ENCODE measurements at regions of chr4 and their contacts with region 1.

Region 1: GRCh38 chr4:97812768-97813167 is 330.5 kb downstream of the STPG2 start:
- DNase-seq: no peak
- ATAC-seq: no peak
- H3K4me3 ChIP-seq: no peak overlapping the region
- H3K27ac ChIP-seq: no peak overlapping the region
- H3K4me1 ChIP-seq: no peaks in the 10 kb centered on the region
- H3K27me3 ChIP-seq: no peaks in the 10 kb centered on the region
- CTCF ChIP-seq: no peak

Region 2: DNA sequence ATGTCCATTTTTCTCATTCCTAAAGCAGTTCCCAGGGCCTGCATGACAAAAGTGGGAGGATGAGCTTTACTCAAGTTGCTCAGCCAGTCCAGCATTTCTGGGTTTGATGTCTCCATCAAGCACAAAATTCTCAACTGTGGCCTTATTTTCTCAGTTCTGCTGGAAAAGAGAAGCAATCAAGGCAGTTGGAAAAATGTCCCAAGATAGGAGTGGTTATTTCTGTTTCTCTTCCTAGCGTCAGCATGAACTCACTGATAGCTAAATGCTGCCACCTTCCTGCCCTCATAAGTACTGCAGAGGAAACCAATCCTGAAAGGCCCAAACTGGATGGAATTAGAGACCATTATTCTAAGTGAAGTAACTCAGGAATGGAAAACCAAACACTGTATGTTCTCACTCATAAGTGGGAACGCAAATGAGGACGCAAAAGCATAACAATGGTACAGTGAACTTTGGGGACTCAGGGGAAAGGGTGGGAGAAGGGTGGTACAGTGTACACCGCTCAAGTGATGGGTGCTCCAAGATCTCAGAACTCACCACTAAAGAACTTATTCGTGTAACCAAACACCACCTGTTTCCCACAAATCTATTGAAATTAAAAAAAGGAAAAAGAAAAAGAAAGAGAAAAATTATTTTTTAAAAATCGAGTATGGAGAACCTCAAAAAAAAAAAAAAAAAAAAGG is 1592.8 kb after region 1 on chr4:
- CTCF ChIA-PET with region 1: no interaction called
- POLR2A ChIA-PET with region 1: interaction called, 12 read pairs
- in situ Hi-C with region 1: no loop called
- intact Hi-C with region 1: no loop called
- DNase-seq: peak; percentile 61
- ATAC-seq: peak; percentile 82
- H3K4me3 ChIP-seq: no peak overlapping the region
- H3K27ac ChIP-seq: no peak overlapping the region
- H3K4me1 ChIP-seq: no peaks in the 10 kb centered on the region
- H3K27me3 ChIP-seq: no peaks in the 10 kb centered on the region
- CTCF ChIP-seq: peak; percentile 81